Dorsolateral prefrontal cortex (tissue), 120 donors: ENCODE measurements at regions of chr18 and their contacts with region 1.

Region 1: DNA sequence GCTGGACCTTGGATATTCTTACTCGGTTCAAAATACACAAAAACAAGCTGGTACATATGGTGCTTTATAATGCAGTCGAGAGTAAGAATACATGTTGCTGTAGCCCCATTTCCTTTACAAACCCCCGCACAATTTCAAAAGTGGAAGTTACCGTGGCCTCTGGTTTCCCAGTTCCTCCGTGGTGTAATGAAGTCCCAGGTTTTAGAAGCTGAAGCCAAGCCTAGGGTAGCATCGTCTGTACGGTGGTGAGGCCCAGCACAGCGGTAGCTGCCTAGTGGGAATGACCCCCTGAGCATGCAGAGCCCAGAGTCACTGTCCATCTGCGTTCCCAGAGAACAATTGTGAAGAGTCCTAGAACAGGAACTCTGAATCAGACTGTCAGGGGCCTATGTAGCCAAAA is 171.8 kb downstream of the ASXL3 start:
- DNase-seq: peak in 1 of 10 donors; percentile 45
- H3K4me3 ChIP-seq: peak overlapping the region in 1 of 59 donors; percentile 17
- H3K27ac ChIP-seq: peak overlapping the region in 20 of 59 donors; percentile 3 to 53 (median 32)
- H3K27me3 ChIP-seq: no peaks in the 10 kb centered on the region
- CTCF ChIP-seq: no peak

Region 2: GRCh38 chr18:32937007-32937540 is 812.8 kb before region 1 on chr18:
- intact Hi-C with region 1: no loop called
- DNase-seq: no peak
- H3K4me3 ChIP-seq: no peak overlapping the region
- H3K27ac ChIP-seq: no peak overlapping the region
- H3K27me3 ChIP-seq: no peaks in the 10 kb centered on the region
- CTCF ChIP-seq: no peak

Region 3: GRCh38 chr18:33577685-33578517 is 171.9 kb before region 1 on chr18 and contains the start of gene ASXL3:
- intact Hi-C with region 1: loop called (anchors 5 kb)
- DNase-seq: peak; percentile 12 to 75 (median 56)
- H3K4me3 ChIP-seq: peak within 1 kb of the TSS; percentile 52 to 92 (median 80)
- H3K27ac ChIP-seq: peak within 1 kb of the TSS; percentile 78 to 99 (median 95)
- H3K27me3 ChIP-seq: no peaks in the 10 kb centered on the region
- CTCF ChIP-seq: peak in 8 of 56 donors; percentile 5 to 18 (median 10)
- total RNA-seq, gene ASXL3: 15.5 to 51.3 (median 34.2) TPM